Sciatic nerve (tissue), 2 donors: ENCODE measurements at regions of chr19 and their contacts with region 1.

Region 1: DNA sequence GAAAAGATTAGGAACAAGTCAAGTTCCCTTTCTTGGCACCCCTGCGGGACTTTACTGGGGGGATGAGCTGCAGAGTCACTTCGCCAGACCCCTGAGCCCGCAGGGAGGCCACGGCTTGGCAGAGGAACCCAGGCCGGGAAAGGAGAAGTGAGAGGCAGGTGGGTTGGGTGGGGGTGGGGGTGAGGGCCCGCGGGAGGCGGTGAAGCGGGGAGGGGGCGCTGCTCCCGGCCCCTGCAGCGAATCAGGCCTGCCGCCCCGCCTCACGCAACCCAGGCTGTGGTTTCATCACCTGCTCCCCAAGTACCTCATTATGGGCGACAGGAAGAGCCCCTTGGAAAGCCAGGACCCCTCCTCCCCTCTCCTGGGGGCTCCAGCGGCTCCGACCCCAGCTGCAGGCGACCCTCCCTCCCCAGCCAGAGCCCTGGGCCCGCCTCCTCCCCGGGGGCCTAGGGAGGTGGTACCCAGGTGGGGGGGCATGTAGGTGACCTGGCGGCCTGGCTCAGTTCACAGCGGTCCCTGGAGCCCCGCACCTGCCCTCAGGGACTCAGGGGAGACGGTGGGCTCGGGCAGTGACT is 9.5 kb downstream of the MEF2B start:
- DNase-seq: no peak
- ATAC-seq: no peak

Region 2: GRCh38 chr19:18697680-18698079 is 462.9 kb before region 1 on chr19:
- intact Hi-C with region 1: no loop called
- DNase-seq: no peak
- ATAC-seq: no peak

Region 3: GRCh38 chr19:19063183-19064097 is 97.1 kb before region 1 on chr19 and contains the start of gene SLC25A42:
- intact Hi-C with region 1: no loop called
- DNase-seq: peak; percentile 99
- ATAC-seq: peak; percentile 98
- total RNA-seq, gene SLC25A42: 14.8 TPM

Region 4: GRCh38 chr19:19203012-19203856 is 42.7 kb after region 1 on chr19 and contains the start of gene NR2C2AP:
- intact Hi-C with region 1: loop called (anchors 1 kb)
- DNase-seq: peak; percentile 96
- ATAC-seq: peak; percentile 97
- total RNA-seq, gene NR2C2AP: 9.2 TPM

Region 5: GRCh38 chr19:19232261-19232721 is 71.7 kb after region 1 on chr19:
- intact Hi-C with region 1: no loop called
- DNase-seq: no peak
- ATAC-seq: no peak